Activated CD4-positive, alpha-beta memory T cell treated with anti-CD3 and anti-CD28 coated beads for 36 hours (primary cell): ENCODE measurements at regions of chrX and their contacts with region 1.

Region 1: DNA sequence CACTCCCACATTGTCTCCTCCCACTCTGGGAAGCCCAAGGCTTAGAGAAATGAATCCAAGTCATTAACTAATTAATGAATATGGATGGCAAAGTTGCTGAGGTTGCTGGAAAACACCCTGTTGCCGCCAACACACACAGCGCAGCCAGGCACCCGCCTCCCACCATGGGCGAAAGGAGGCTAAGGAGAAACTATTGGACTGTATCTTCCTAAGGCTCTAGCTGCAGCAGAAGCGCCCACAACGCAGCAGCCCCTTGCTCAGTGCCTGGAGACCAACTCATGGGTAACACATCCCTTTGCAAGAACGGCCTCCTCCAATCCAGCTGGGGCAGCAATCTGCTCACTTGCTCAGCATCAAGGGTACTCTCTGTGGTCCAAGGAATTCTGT is 34.2 kb downstream of the TSC22D3 start:
- DNase-seq: no peak
- H3K4me3 Mint-ChIP-seq: peak overlapping the region; percentile 79
- H3K27ac Mint-ChIP-seq: peak overlapping the region; percentile 95
- H3K4me1 Mint-ChIP-seq: peaks cover 39% of the 10 kb centered on the region
- H3K27me3 Mint-ChIP-seq: peaks cover 2% of the 10 kb centered on the region

Region 2: GRCh38 chrX:107716816-107717700 is 24.3 kb before region 1 on chrX:
- CTCF ChIA-PET with region 1: interaction called, 9 read pairs
- POLR2A ChIA-PET with region 1: interaction called, 13 read pairs
- intact Hi-C with region 1: loop called (anchors 1 kb)
- DNase-seq: peak; percentile 91
- H3K4me3 Mint-ChIP-seq: peak overlapping the region; percentile 89
- H3K27ac Mint-ChIP-seq: peak overlapping the region; percentile 90
- H3K4me1 Mint-ChIP-seq: peaks cover 44% of the 10 kb centered on the region
- H3K27me3 Mint-ChIP-seq: no peaks in the 10 kb centered on the region

Region 3: GRCh38 chrX:108261549-108262203 is 520.3 kb after region 1 on chrX:
- CTCF ChIA-PET with region 1: no interaction called
- POLR2A ChIA-PET with region 1: no interaction called
- intact Hi-C with region 1: no loop called
- DNase-seq: no peak
- H3K4me3 Mint-ChIP-seq: no peak overlapping the region
- H3K27ac Mint-ChIP-seq: no peak overlapping the region
- H3K4me1 Mint-ChIP-seq: no peaks in the 10 kb centered on the region
- H3K27me3 Mint-ChIP-seq: peaks cover 3% of the 10 kb centered on the region